Calu3 (cell line): ENCODE measurements at regions of chr3 and their contacts with region 1.

Region 1: DNA sequence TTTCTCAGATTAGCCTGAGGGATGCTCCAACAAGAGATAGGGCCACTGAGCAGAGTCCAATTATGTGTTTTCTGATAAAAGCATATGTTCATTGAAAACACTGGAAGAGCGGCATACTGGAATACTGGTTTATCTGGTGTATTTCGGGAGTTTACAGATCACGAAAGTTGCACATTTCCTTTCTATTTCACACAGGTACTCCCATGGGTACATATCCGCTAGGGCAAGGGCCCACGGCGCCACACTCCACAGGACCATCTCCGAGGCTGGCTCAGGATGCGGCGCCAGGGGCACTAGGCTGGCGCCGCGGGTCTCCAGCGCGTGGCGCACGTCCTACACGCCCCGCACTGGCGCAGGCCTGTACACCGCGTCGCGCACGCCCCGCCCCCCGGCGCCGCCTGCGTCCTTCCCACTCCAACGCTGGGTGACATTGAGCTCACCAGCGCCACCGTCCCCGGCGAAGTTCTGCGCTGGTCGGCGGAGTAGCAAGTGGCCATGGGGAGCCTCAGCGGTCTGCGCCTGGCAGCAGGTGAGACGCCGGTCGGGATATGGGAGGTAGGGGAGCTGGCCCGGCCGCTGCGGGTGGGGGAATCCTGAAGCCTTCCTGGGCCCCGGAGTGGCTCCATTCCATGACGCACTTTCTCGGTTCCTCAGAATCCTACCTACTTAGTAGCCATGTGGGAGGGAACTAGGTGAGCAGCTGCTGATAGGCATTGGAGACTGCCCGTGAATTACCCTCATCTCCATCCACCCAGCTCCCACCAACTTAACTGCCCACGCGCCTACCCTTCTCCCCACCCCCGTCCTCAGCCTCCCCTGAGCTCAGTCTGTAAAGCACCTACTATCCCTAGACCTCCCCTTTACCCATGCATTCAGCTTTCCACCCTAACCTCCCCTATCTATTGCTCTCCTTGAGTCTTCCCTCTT is at the start of gene FAM162A:
- DNase-seq: peak; percentile 97
- H3K4me3 Mint-ChIP-seq: peak within 1 kb of the TSS; percentile 87
- H3K27ac Mint-ChIP-seq: peak within 1 kb of the TSS; percentile 78
- H3K4me1 Mint-ChIP-seq: peaks cover 9% of the 10 kb centered on the region
- H3K27me3 Mint-ChIP-seq: no peaks in the 10 kb centered on the region
- CTCF ChIP-seq: peak; percentile 39
- total RNA-seq, gene FAM162A: 34.3 and 38.0 TPM in 2 replicates

Region 2: GRCh38 chr3:122305818-122306621 is 78.0 kb before region 1 on chr3:
- CTCF ChIA-PET with region 1: interaction called, 20 read pairs
- intact Hi-C with region 1: no loop called
- DNase-seq: peak; percentile 52
- H3K4me3 Mint-ChIP-seq: no peak overlapping the region
- H3K27ac Mint-ChIP-seq: no peak overlapping the region
- H3K4me1 Mint-ChIP-seq: peaks cover 8% of the 10 kb centered on the region
- H3K27me3 Mint-ChIP-seq: no peaks in the 10 kb centered on the region
- CTCF ChIP-seq: peak; percentile 9

Region 3: GRCh38 chr3:122365073-122365472 is 19.0 kb before region 1 on chr3:
- CTCF ChIA-PET with region 1: interaction called, 17 read pairs
- intact Hi-C with region 1: no loop called
- DNase-seq: no peak
- H3K4me3 Mint-ChIP-seq: peak overlapping the region; percentile 36
- H3K27ac Mint-ChIP-seq: peak overlapping the region; percentile 85
- H3K4me1 Mint-ChIP-seq: peaks cover 30% of the 10 kb centered on the region
- H3K27me3 Mint-ChIP-seq: no peaks in the 10 kb centered on the region
- CTCF ChIP-seq: no peak

Region 4: DNA sequence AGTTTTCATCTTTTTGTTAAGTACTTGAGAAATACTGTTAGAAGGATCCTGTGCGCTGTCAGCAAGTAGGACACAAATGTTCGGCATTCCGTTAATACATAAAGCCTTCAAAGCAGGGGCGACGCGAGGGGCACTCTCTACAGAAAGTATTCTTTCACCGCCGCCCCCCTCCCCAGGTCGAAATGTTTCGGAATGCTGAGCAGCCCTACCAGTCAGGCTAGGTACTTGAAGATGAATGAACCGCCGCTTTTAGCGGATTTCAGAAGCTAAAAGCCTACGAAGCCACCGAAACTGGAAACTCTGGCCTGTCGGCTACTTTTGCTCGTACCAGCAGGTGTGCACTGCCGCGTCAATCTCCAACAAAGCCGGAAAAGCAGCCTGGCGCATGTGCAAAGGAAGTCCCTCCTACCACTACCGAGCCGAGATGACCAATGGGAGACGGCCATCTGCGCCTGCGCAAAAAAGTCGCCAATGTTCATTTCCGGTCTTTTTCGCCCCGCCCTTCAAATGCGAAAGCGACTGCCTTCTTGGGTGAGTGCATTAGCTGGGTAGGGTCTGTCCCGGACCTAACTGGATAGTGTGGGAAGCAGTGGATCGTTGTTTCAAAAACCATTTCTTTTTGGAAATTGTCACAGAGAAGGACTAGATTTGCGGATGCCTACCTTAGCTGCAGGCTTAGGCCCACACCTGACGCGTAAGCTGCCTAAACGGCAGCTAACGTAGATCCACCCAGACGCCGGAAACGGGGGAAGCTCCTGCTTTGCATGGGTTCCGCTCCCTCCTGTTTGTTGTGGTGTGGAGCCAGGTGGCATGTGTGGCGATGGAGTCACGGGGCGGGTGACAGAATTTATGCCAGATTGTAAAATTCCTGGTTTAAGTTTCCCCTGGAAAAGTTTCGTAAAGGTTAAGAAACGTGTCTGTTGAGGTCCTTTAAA is 32.0 kb after region 1 on chr3 and contains the start of gene WDR5B:
- CTCF ChIA-PET with region 1: interaction called, 11 read pairs
- intact Hi-C with region 1: no loop called
- DNase-seq: peak; percentile 96
- H3K4me3 Mint-ChIP-seq: peak within 1 kb of the TSS; percentile 94
- H3K27ac Mint-ChIP-seq: peak within 1 kb of the TSS; percentile 98
- H3K4me1 Mint-ChIP-seq: peaks cover 20% of the 10 kb centered on the region
- H3K27me3 Mint-ChIP-seq: no peaks in the 10 kb centered on the region
- CTCF ChIP-seq: peak; percentile 12
- total RNA-seq, gene WDR5B: 7.2 and 7.9 TPM in 2 replicates

Region 5: DNA sequence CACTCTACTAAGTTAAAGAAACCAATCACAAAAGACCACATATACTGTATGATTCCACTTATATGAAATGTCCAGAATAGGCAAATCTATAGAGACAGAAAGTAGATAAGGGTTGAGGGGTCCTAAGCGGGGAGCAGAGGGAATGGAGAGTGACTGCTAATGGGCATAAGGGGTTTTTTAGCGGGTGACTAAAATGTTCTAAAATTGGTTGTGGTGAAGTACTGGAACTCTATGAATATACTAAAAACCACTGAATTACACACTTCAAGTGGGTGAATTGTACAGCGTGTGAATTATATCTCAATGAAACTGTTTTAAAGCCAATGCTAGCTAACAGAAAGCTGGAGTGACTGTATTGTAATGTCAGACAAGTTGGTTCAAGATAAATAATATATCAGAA is 97.4 kb after region 1 on chr3:
- CTCF ChIA-PET with region 1: no interaction called
- intact Hi-C with region 1: no loop called
- DNase-seq: no peak
- H3K4me3 Mint-ChIP-seq: no peak overlapping the region
- H3K27ac Mint-ChIP-seq: no peak overlapping the region
- H3K4me1 Mint-ChIP-seq: peaks cover 17% of the 10 kb centered on the region
- H3K27me3 Mint-ChIP-seq: no peaks in the 10 kb centered on the region
- CTCF ChIP-seq: no peak

Region 6: DNA sequence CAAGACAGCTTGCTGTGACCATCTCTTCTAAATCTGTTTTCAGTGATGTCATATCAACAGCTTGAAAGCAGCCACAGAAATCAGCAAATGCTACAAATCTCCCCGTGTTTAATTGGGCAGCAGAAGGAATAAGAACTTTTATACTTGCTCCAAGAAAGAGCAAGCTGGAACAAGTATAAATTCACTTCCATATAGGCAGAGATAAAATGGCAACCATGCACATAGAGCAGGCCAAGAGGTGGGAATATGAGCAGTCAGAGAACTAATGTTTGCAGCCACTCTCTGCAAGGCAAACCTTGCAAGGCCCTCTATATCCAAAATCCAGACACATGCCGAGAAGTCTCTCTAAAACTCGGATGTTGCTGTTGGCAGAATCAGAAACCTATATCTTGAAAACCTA is 164.0 kb after region 1 on chr3:
- CTCF ChIA-PET with region 1: no interaction called
- intact Hi-C with region 1: no loop called
- DNase-seq: no peak
- H3K4me3 Mint-ChIP-seq: no peak overlapping the region
- H3K27ac Mint-ChIP-seq: no peak overlapping the region
- H3K4me1 Mint-ChIP-seq: no peaks in the 10 kb centered on the region
- H3K27me3 Mint-ChIP-seq: no peaks in the 10 kb centered on the region
- CTCF ChIP-seq: no peak